Heart left ventricle (tissue), 16 donors: ENCODE measurements at regions of chr21 and their contacts with region 1.

Region 1: GRCh38 chr21:39788383-39788782 is 43.4 kb downstream of the IGSF5 start:
- DNase-seq: peak; percentile 75 to 91 (median 84)
- ATAC-seq: peak; percentile 98 to 99 (median 99)
- H3K4me3 ChIP-seq: peak overlapping the region in 11 of 12 donors; percentile 14 to 50 (median 37)
- H3K27ac ChIP-seq: peak overlapping the region in 8 of 12 donors; percentile 26 to 59 (median 50)
- H3K4me1 ChIP-seq: peaks cover 0 to 12% (median 0%) of the 10 kb centered on the region in 12 donors
- H3K27me3 ChIP-seq: no peaks in the 10 kb centered on the region
- CTCF ChIP-seq: peak; percentile 51 to 92 (median 76)
- POLR2A ChIP-seq: no peak

Region 2: GRCh38 chr21:40385892-40386599 is 597.7 kb after region 1 on chr21:
- intact Hi-C with region 1: loop called in 1 of 10 experiments (anchors 10 kb)
- DNase-seq: peak; percentile 23 to 73 (median 45)
- ATAC-seq: peak; percentile 37 to 83 (median 75)
- H3K4me3 ChIP-seq: no peak overlapping the region
- H3K27ac ChIP-seq: no peak overlapping the region
- H3K4me1 ChIP-seq: peaks cover 0 to 4% (median 0%) of the 10 kb centered on the region in 12 donors
- H3K27me3 ChIP-seq: peaks cover 0 to 12% (median 0%) of the 10 kb centered on the region in 9 donors
- CTCF ChIP-seq: peak; percentile 60 to 87 (median 80)
- POLR2A ChIP-seq: no peak